Right ventricle myocardium inferior (tissue), 1 donor: ENCODE measurements at regions of chr2 and their contacts with region 1.

Region 1: GRCh38 chr2:61764035-61764800 is 89.6 kb downstream of the FAM161A start:
- DNase-seq: peak; percentile 98
- ATAC-seq: peak; percentile 100

Region 2: GRCh38 chr2:61658841-61659780 is 105.1 kb before region 1 on chr2:
- intact Hi-C with region 1: loop called (anchors 2 kb)
- DNase-seq: no peak
- ATAC-seq: peak; percentile 88

Region 3: GRCh38 chr2:61679096-61679495 is 85.1 kb before region 1 on chr2:
- intact Hi-C with region 1: no loop called
- DNase-seq: no peak
- ATAC-seq: no peak

Region 4: DNA sequence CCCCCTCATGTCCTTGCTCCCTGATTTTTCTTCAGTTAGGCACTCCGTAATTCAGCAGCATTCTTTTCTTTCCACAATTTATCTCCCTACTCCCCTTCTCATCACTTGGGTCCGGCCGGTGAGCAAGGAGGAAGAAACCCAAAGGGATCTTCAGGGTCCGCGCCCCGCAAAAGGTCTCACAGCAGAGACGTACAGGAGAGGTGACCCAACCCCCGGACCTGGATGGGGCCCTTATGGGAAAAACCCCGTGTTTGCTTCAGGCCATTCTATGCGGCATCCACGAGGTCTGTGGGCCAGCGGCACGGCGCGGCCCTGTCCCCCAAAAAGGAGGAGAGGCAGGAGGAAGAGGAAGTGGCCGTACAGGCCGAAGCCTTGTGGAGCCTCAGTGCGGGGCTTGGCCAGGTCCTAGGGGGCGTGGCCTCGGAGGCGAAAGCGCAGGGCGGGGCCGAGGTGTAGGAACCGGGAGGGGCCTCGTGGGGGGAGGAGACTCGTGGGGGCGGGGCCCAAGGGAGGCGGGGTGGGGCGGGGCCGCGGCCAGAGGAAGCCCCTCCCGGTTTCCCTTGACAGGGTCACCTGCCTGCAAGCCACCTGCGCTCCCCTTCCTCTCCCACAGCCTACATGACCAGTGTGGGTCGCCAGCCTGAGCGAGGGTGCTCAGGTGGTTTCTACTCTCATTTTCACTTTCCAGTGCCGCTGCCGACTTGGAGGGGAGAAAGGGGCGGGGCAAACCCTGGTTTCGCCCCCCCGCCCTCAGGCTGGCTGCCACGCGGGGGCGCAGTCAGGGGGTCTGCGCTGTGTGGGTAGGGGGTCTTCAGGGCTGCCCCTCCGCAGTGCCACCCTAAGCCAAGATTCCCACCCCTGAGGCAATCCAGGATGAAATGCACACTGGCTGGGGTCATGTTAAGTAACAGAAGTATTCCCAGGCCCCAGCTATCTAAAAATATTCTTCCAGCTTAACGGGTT is 69.6 kb before region 1 on chr2:
- intact Hi-C with region 1: loop called (anchors 5 kb)
- DNase-seq: peak; percentile 98
- ATAC-seq: peak; percentile 100

Region 5: GRCh38 chr2:61710711-61711110 is 53.5 kb before region 1 on chr2:
- intact Hi-C with region 1: loop called (anchors 5 kb)
- DNase-seq: no peak
- ATAC-seq: no peak